Posterior vena cava (tissue), 2 donors: ENCODE measurements at regions of chrX and their contacts with region 1.

Region 1: DNA sequence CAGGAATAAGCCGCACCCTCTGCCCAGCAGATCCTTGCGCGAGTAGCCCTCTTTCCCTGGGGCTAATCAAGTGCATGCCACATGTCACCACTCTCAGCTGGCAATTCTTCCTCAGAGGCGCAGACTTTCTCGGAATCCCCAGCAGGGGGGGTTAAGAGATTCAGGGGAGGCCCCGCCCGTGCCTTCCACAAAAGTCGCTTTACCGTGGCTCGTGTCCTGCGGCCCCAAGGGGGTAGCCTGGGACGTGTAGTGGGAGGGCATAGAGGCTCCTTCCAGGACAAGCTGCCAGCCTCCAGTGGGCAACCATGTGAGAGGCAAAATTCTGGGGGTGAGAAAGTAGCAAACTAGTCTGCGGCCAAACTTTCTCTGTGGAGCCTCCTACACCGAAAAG is 652 bp downstream of the SRPX start:
- DNase-seq: peak; percentile 81

Region 2: GRCh38 chrX:36348509-36348908 is 1871.5 kb before region 1 on chrX:
- intact Hi-C with region 1: loop called in 1 of 2 experiments (anchors 10 kb)
- DNase-seq: no peak